Calu3 (cell line): ENCODE measurements at regions of chr2 and their contacts with region 1.

Region 1: GRCh38 chr2:76599732-76600368 is 889.1 kb upstream of the GCFC2 start:
- DNase-seq: peak; percentile 10
- H3K4me3 Mint-ChIP-seq: no peak overlapping the region
- H3K27ac Mint-ChIP-seq: no peak overlapping the region
- H3K4me1 Mint-ChIP-seq: no peaks in the 10 kb centered on the region
- H3K27me3 Mint-ChIP-seq: no peaks in the 10 kb centered on the region
- CTCF ChIP-seq: peak; percentile 48

Region 2: DNA sequence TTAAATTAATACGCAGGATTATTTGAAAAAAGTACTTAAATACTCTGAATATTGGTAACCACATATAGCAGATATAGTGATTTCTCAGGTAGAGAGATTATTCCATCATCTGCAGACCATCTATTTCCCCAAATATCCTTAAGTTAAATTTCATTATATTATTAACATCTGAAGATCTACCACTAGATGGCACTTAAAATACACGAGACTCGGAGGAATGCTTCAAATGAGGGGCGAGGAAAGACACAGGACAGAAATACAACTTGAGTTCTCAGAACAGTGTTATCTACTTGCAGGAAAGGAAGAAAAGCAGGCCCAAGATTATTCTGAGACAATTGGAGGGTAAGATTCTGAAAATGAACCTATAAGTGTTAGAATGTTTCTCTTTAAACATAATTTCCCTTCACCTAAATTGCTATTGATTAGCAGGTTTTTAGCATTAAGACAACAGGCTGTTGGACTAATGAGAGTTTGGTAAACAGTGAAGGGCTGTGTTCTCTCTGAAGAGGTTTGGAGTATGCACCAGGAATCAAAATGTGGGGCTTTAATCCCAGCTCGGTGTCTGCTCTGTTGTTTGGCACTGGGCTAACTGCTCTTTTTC is 812.2 kb before region 1 on chr2:
- CTCF ChIA-PET with region 1: interaction called, 4 read pairs
- intact Hi-C with region 1: loop called (anchors 5 kb)
- DNase-seq: no peak
- H3K4me3 Mint-ChIP-seq: no peak overlapping the region
- H3K27ac Mint-ChIP-seq: no peak overlapping the region
- H3K4me1 Mint-ChIP-seq: no peaks in the 10 kb centered on the region
- H3K27me3 Mint-ChIP-seq: no peaks in the 10 kb centered on the region
- CTCF ChIP-seq: no peak

Region 3: DNA sequence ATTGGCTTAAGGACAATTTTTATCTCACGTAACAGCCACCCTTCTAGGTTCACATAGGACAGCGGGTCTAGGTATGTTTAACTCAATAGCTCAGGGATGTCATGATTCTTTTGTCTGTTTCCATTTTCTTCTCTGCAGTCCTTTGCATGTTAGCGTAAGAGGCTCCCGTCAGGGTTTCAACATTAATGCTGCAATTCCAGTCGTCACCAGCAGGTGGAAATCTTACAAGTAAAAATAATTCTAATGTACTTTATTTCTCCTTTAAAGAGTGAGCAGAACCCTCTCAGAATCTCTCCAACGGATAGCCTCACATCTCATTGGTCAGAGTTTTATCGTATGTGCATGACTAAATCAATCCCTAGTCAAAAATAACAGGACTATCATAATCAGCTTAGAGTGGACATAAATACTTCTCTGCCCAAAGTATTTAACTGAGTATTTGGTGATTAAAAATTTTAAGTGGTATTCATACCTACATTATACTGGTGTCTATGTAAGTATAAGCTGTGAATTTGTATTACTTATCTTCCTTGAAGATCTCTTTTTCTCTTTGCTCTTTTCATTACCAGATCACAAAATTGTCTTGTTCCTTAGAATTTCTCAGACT is 401.9 kb before region 1 on chr2:
- CTCF ChIA-PET with region 1: no interaction called
- intact Hi-C with region 1: loop called (anchors 2 kb)
- DNase-seq: peak; percentile 41
- H3K4me3 Mint-ChIP-seq: no peak overlapping the region
- H3K27ac Mint-ChIP-seq: no peak overlapping the region
- H3K4me1 Mint-ChIP-seq: no peaks in the 10 kb centered on the region
- H3K27me3 Mint-ChIP-seq: no peaks in the 10 kb centered on the region
- CTCF ChIP-seq: peak; percentile 49